CD8-positive, alpha-beta T cell (primary cell): ENCODE measurements at regions of chr16 and their contacts with region 1.

Region 1: DNA sequence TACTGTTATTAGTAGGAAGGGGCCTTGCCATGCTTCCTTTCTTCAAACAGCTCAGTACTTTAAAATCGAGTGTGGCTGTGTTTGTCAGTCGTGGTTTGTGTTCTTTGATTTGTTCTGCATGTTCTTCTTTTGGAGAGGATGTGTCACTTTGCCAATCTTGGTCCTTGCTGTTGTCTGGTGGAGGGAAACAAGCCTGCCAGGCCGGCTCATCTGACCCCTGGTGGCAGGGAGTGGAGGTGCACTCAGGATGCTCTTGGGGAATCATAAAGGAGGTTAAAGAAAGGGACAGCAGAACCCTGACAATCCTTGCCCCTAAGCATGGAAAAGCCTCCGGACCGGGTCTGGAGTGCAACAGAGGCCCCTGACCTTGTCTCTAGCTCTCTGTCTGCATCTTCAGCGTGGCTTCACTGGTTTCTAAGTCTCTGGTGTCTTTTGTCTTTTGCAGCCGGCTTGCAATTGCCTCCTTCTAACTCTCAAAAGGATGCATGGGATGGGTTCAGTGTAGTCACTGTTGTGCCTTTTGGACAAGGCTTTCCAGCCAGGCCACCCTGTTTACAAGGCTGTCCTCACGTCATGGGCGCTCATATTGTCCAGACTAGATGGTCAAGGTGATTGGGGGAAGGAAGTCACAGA is 135.8 kb downstream of the WWOX start:
- DNase-seq: peak; percentile 33 to 74 (median 60)
- ATAC-seq: peak; percentile 73
- H3K4me3 ChIP-seq: no peak overlapping the region
- H3K4me3 Mint-ChIP-seq: no peak overlapping the region
- H3K27ac ChIP-seq: no peak overlapping the region
- H3K27ac Mint-ChIP-seq: no peak overlapping the region
- H3K4me1 ChIP-seq: no peaks in the 10 kb centered on the region
- H3K4me1 Mint-ChIP-seq: peaks cover 2% of the 10 kb centered on the region
- H3K27me3 ChIP-seq: no peaks in the 10 kb centered on the region
- H3K27me3 Mint-ChIP-seq: no peaks in the 10 kb centered on the region
- CTCF ChIP-seq: peak; percentile 83

Region 2: DNA sequence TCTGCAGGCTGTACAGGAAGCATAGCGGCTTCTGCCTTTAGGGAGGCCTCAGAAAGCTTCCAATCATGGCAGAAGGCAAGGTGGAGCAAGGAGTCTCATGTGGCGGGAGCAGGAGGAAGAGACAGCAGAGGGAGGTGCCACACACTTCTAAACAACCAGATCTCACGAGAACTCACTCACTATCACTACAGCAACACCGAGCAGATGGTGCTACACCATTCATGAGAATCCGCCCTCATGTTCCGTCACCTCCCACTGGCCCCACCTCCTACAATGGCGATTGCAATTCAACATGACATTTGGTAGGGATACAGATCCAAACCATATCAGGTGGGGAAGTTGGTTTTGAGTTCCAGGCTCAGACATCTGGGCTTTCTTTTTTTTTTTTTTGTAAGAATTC is 544.9 kb before region 1 on chr16:
- CTCF ChIA-PET with region 1: no interaction called
- POLR2A ChIA-PET with region 1: no interaction called
- intact Hi-C with region 1: no loop called
- DNase-seq: no peak
- ATAC-seq: no peak
- H3K4me3 ChIP-seq: no peak overlapping the region
- H3K4me3 Mint-ChIP-seq: no peak overlapping the region
- H3K27ac ChIP-seq: no peak overlapping the region
- H3K27ac Mint-ChIP-seq: no peak overlapping the region
- H3K4me1 ChIP-seq: no peaks in the 10 kb centered on the region
- H3K4me1 Mint-ChIP-seq: no peaks in the 10 kb centered on the region
- H3K27me3 ChIP-seq: no peaks in the 10 kb centered on the region
- H3K27me3 Mint-ChIP-seq: peaks cover 37% of the 10 kb centered on the region
- CTCF ChIP-seq: no peak

Region 3: DNA sequence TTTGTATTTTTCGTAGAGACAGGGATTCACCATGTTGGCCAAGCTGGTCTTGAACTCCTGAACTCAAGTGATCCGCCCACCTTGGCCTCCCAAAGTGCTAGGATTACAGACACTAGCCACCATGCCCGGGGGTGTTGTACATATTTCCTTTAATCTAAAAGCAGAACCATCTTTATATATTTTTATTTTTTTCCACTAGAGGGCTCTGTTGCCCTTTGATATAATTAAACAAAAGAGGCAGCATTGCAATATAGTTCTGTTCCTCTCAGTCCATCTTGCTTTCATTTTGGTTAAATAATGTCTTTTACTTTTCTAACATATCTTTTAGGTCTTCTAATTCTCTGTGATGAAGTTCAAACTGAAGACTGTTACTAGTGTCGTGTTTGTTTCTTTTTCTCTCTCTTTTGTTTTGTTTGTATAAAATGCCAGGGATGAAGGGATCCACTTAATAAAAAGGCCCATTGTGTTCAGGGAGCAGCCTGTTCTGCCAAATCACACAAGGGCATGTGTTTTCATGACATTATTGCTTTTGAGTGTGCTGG is 112.4 kb before region 1 on chr16:
- CTCF ChIA-PET with region 1: interaction called, 8 read pairs
- POLR2A ChIA-PET with region 1: no interaction called
- intact Hi-C with region 1: loop called (anchors 1 kb)
- DNase-seq: peak in 3 of 9 experiments; percentile 9 to 63 (median 49)
- ATAC-seq: peak; percentile 49
- H3K4me3 ChIP-seq: no peak overlapping the region
- H3K4me3 Mint-ChIP-seq: no peak overlapping the region
- H3K27ac ChIP-seq: no peak overlapping the region
- H3K27ac Mint-ChIP-seq: no peak overlapping the region
- H3K4me1 ChIP-seq: no peaks in the 10 kb centered on the region
- H3K4me1 Mint-ChIP-seq: peaks cover 3% of the 10 kb centered on the region
- H3K27me3 ChIP-seq: no peaks in the 10 kb centered on the region
- H3K27me3 Mint-ChIP-seq: no peaks in the 10 kb centered on the region
- CTCF ChIP-seq: peak; percentile 70

Region 4: DNA sequence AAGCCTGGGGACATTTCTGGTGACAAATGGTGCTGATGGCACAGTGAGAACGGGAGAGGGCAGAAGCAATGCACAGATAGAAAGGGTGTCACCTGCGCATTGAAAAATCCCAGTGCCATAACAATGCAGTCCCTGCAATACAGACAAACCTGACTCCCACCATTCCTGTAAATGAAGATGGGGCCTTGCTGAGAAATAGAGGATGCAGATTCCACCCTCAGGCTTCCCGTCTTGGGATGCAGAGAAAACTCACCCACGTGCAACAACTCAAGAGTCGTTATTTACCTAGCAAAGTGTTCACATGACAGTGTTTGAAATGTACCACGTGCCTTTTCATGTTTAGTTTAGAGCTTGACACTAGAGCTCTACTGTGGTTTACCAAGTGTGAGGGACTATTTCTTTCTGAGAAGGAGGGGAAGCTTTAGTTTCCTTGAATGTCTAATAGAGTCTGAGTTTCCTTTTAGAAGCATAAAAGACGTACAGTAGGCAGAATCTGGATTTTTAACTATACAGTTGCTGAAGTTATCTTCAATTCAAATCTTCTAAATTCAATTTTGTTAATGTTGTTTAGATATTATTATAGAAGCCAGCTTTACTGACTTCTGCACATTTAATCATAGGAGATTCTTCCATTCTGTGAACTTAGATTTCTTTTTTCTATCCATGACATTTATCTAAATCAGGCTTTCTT is 100.2 kb before region 1 on chr16:
- CTCF ChIA-PET with region 1: interaction called, 6 read pairs
- POLR2A ChIA-PET with region 1: no interaction called
- intact Hi-C with region 1: loop called in 1 of 2 experiments (anchors 5 kb)
- DNase-seq: peak in 2 of 9 experiments; percentile 9 to 36
- ATAC-seq: no peak
- H3K4me3 ChIP-seq: no peak overlapping the region
- H3K4me3 Mint-ChIP-seq: no peak overlapping the region
- H3K27ac ChIP-seq: no peak overlapping the region
- H3K27ac Mint-ChIP-seq: peak overlapping the region; percentile 1
- H3K4me1 ChIP-seq: peaks cover 6% of the 10 kb centered on the region
- H3K4me1 Mint-ChIP-seq: peaks cover 13% of the 10 kb centered on the region
- H3K27me3 ChIP-seq: no peaks in the 10 kb centered on the region
- H3K27me3 Mint-ChIP-seq: no peaks in the 10 kb centered on the region
- CTCF ChIP-seq: no peak

Region 5: GRCh38 chr16:78246559-78246958 is 11.3 kb after region 1 on chr16:
- CTCF ChIA-PET with region 1: interaction called, 10 read pairs
- POLR2A ChIA-PET with region 1: no interaction called
- intact Hi-C with region 1: no loop called
- DNase-seq: no peak
- ATAC-seq: no peak
- H3K4me3 ChIP-seq: no peak overlapping the region
- H3K4me3 Mint-ChIP-seq: no peak overlapping the region
- H3K27ac ChIP-seq: no peak overlapping the region
- H3K27ac Mint-ChIP-seq: no peak overlapping the region
- H3K4me1 ChIP-seq: no peaks in the 10 kb centered on the region
- H3K4me1 Mint-ChIP-seq: no peaks in the 10 kb centered on the region
- H3K27me3 ChIP-seq: no peaks in the 10 kb centered on the region
- H3K27me3 Mint-ChIP-seq: no peaks in the 10 kb centered on the region
- CTCF ChIP-seq: no peak

Region 6: DNA sequence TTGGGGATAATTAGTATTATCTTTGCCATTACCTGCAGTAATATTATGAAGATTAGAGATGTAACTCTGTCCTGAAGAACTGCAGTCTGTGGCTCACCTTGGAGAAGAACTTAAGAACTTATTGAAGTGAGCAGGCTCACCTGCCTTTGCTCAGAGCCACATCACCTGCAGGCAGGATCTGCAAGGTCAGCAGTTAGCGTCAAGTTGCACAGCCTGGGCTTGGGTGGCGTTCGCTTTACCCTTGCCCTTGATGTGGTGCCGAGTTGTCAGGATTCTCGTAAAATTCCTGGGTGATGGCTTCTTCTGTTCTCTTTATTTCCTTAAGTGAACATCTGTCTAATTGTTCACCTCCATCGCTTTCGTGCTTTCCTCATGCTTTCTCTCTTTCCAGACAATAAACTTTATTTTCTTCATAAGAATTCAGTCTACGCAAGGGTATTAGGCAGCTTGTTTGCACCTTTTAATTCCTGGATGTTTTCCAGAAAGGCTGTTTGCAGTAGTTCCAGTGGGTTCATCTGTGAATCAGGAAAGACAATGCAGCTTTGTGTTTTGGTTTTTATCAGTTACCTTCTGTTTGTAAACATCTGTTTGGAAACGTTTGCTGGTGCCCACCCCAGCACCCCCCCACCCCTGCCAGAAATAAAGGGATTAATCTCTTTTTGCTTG is 118.5 kb after region 1 on chr16:
- CTCF ChIA-PET with region 1: no interaction called
- POLR2A ChIA-PET with region 1: no interaction called
- intact Hi-C with region 1: no loop called
- DNase-seq: no peak
- ATAC-seq: no peak
- H3K4me3 ChIP-seq: no peak overlapping the region
- H3K4me3 Mint-ChIP-seq: no peak overlapping the region
- H3K27ac ChIP-seq: no peak overlapping the region
- H3K27ac Mint-ChIP-seq: no peak overlapping the region
- H3K4me1 ChIP-seq: no peaks in the 10 kb centered on the region
- H3K4me1 Mint-ChIP-seq: no peaks in the 10 kb centered on the region
- H3K27me3 ChIP-seq: no peaks in the 10 kb centered on the region
- H3K27me3 Mint-ChIP-seq: no peaks in the 10 kb centered on the region
- CTCF ChIP-seq: no peak